K562 (cell line): ENCODE measurements at regions of chr5 and their contacts with region 1.

Region 1: DNA sequence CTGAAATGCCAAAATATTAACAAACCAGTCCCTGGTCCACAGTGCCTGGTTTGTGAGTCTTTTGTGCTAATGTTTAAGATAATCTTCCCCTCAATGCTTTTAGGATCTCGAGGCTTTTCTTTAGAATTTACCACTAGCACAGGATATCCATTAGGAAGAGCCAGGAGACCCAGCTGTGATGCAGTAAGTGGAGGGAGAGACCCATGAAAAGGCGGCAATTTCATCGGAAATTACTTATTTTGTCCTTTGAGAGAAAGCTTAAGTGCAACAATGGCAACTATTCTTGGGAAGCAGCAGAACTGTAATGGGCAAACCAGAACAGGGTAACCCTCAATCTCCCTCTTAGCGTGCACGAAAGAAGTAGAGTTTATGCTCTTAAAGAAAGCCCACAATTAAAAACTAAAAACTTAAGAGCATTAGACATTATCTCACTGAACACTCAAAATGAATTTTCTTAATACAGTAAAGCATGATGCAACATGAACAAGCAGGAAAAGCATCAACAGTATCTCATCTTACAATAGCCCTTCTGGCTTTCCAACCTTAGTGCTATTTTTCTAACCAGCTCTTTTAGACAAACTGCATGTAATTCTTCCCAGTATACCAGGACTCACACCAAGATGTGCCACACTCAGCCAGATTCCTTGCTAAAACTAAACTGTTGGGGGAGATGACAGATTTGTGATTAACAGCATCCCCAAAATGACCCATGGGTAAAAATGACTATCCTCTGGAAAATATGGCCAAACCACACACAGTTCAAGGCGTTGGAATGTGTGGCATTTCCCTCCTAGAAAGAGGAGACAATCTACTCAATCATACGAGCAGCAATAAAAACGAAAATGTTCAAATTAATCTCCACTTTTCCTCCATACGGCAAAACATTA is 36.4 kb downstream of the PWWP2A start:
- DNase-seq: no peak
- ATAC-seq: no peak
- H3K4me3 ChIP-seq: no peak overlapping the region
- H3K27ac ChIP-seq: no peak overlapping the region
- H3K4me1 ChIP-seq: peaks cover 0 to 13% of the 10 kb centered on the region in 2 experiments; a peak in 3 of 5 replicates
- H3K27me3 ChIP-seq: no peaks in the 10 kb centered on the region
- CTCF ChIP-seq: no peak
- EP300 ChIP-seq: no peak
- POLR2A ChIP-seq: no peak
- RAD21 ChIP-seq: no peak

Region 2: DNA sequence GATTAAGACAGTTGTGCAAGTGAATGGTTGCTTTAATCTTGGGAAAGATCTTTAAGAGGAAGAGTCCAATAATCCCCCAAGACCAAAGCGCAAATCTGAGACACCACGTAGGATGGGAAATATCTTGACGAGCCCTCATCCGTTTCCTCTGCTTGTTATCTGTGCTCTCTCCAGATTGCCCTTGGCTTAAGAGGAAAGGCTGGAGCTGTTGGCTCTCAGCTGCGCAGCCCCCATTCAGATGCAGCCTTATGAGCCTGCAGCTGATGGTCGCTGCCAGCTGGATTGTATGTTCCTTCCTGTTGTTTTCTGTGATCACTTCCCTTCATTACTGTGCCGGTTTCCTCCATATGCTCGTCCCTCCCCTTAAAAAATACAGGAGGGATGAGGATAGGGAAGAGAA is 11.3 kb before region 1 on chr5:
- CTCF ChIA-PET with region 1: no interaction called
- POLR2A ChIA-PET with region 1: interaction called, 11 read pairs
- in situ Hi-C with region 1: no loop called
- intact Hi-C with region 1: no loop called
- DNase-seq: no peak
- ATAC-seq: no peak
- H3K4me3 ChIP-seq: no peak overlapping the region
- H3K27ac ChIP-seq: no peak overlapping the region
- H3K4me1 ChIP-seq: no peaks in the 10 kb centered on the region; a peak in 1 of 5 replicates
- H3K27me3 ChIP-seq: no peaks in the 10 kb centered on the region
- CTCF ChIP-seq: no peak
- EP300 ChIP-seq: no peak
- POLR2A ChIP-seq: no peak
- RAD21 ChIP-seq: no peak

Region 3: DNA sequence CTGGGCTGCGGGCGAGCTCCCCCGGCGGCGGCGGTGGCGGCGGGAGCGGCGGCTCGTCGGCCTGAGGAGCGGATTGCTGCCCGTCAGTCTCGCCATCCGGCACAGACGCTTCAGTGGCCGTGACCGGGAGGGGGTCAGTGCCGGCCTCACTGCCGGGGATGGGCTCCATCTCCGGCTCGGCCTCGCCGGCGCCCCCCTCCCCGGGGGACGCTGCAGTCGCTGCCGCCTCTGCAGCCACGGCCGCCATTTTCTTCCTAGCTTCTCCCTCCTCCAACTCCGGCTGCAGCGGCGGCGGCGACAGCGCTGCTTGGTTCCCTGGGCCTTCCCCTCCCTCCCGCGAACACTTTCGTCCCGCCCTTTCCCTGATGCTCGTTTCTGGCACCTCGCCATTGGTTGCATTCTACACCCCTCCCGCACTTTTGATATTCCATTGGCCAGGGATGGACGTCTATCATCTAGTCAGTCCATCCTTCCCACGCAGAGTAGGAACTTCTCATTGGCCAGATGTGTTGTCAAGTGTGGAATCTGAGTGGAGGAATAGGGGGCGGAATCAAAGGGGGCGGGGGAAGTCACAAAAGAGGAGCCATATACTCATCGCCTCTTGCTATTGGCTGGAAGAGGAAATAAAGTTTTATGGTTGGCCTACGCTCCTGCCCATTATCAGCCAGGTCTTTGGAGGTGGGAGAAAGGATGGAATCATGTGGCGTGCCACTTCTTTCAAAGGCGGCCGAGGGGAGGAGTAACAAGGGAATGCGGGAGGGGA is 36.5 kb after region 1 on chr5 and contains the start of gene PWWP2A:
- CTCF ChIA-PET with region 1: no interaction called
- POLR2A ChIA-PET with region 1: no interaction called
- in situ Hi-C with region 1: no loop called
- intact Hi-C with region 1: loop called (anchors 1 kb)
- DNase-seq: peak; percentile 95 to 99 (median 97)
- ATAC-seq: peak; percentile 96
- H3K4me3 ChIP-seq: peak within 1 kb of the TSS; percentile 100
- H3K27ac ChIP-seq: peak within 1 kb of the TSS; percentile 82
- H3K4me1 ChIP-seq: peaks cover 0 to 9% of the 10 kb centered on the region in 2 experiments; a peak in 3 of 5 replicates
- H3K27me3 ChIP-seq: no peaks in the 10 kb centered on the region
- CTCF ChIP-seq: no peak
- EP300 ChIP-seq: no peak
- POLR2A ChIP-seq: peak; percentile 89
- RAD21 ChIP-seq: 0 out of 4 replicates have a peak, but pooled peaks of 1 of the 2 experiments have one; percentile 14
- polyA plus RNA-seq, gene PWWP2A: 2.7 to 3.6 TPM

Region 4: GRCh38 chr5:160260881-160261815 is 178.3 kb after region 1 on chr5:
- CTCF ChIA-PET with region 1: no interaction called
- POLR2A ChIA-PET with region 1: no interaction called
- in situ Hi-C with region 1: no loop called
- intact Hi-C with region 1: loop called (anchors 5 kb)
- DNase-seq: peak; percentile 93 to 97 (median 94)
- ATAC-seq: peak; percentile 94
- H3K4me3 ChIP-seq: no peak overlapping the region
- H3K27ac ChIP-seq: peak overlapping the region; percentile 87
- H3K4me1 ChIP-seq: peaks cover 29 to 36% of the 10 kb centered on the region in 2 experiments
- H3K27me3 ChIP-seq: no peaks in the 10 kb centered on the region
- CTCF ChIP-seq: no peak
- EP300 ChIP-seq: peak; percentile 97
- POLR2A ChIP-seq: no peak
- RAD21 ChIP-seq: no peak

Region 5: DNA sequence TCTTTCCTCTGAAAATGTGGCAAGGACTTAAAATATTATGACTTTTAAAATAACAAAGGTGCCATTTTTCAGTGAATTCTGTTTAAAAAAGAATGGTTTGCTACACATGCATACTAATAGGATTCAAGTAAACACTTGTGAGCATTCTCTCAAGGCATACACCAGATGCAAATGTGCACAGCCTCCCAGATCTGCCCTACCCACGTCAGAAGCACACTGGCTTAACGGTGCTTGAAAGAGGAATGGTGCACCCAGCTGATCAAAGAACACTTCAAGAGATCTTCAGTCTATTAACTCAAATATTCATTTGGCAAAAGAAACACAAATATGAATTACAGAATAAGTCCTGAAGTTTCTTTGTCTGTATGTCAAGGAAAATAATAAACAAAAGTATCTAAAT is 1447.8 kb after region 1 on chr5:
- CTCF ChIA-PET with region 1: no interaction called
- POLR2A ChIA-PET with region 1: no interaction called
- in situ Hi-C with region 1: no loop called
- intact Hi-C with region 1: no loop called
- DNase-seq: no peak
- ATAC-seq: no peak
- H3K4me3 ChIP-seq: no peak overlapping the region
- H3K27ac ChIP-seq: no peak overlapping the region
- H3K4me1 ChIP-seq: no peaks in the 10 kb centered on the region
- H3K27me3 ChIP-seq: no peaks in the 10 kb centered on the region
- CTCF ChIP-seq: no peak
- EP300 ChIP-seq: no peak
- POLR2A ChIP-seq: no peak
- RAD21 ChIP-seq: no peak